Heart left ventricle (tissue), 16 donors: ENCODE measurements at regions of chr21 and their contacts with region 1.

Region 1: GRCh38 chr21:36859744-36860501 is 106.5 kb downstream of the HLCS start:
- DNase-seq: peak; percentile 84 to 86 (median 85)
- ATAC-seq: peak; percentile 80 to 99 (median 96)
- H3K4me3 ChIP-seq: no peak overlapping the region
- H3K27ac ChIP-seq: peak overlapping the region in 11 of 12 donors; percentile 25 to 83 (median 62)
- H3K4me1 ChIP-seq: peaks cover 0 to 16% (median 7%) of the 10 kb centered on the region in 12 donors
- H3K27me3 ChIP-seq: no peaks in the 10 kb centered on the region
- CTCF ChIP-seq: no peak
- POLR2A ChIP-seq: no peak

Region 2: DNA sequence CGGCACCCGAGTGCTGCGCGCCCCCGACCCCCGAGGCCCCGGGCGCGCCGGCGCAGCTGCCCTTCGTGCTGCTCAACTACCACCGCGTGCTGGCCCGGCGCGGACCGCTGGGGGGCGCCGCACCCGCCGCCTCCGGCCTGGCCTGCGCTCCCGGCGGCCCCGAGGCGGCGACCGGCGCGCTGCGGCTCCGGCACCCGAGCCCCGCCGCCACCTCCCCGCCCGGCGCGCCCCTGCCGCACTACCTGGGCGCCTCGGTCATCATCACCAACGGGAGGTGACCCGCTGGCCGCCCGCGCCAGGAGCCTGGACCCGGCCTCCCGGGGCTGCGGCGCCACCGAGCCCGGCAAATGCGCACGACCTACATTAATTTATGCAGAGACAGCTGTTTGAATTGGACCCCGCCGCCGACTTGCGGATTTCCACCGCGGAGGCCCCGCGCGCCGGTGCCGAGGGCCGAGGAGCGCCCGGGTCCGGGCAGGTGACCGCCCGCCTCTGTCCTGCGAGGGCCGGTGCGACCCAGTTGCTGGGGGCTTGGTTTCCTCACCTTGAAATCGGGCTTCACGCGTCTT is 112.0 kb before region 1 on chr21:
- intact Hi-C with region 1: loop called in 6 of 10 experiments (anchors 5 to 10 kb)
- DNase-seq: peak; percentile 39 to 71 (median 62)
- ATAC-seq: peak in 3 of 4 donors; percentile 49 to 77 (median 68)
- H3K4me3 ChIP-seq: peak overlapping the region; percentile 22 to 62 (median 56)
- H3K27ac ChIP-seq: peak overlapping the region in 1 of 12 donors; percentile 33
- H3K4me1 ChIP-seq: peaks cover 0 to 19% (median 5%) of the 10 kb centered on the region in 12 donors
- H3K27me3 ChIP-seq: peaks cover 0 to 29% (median 0%) of the 10 kb centered on the region in 9 donors
- CTCF ChIP-seq: peak in 4 of 12 donors; percentile 9 to 35 (median 26)
- POLR2A ChIP-seq: no peak

Region 3: DNA sequence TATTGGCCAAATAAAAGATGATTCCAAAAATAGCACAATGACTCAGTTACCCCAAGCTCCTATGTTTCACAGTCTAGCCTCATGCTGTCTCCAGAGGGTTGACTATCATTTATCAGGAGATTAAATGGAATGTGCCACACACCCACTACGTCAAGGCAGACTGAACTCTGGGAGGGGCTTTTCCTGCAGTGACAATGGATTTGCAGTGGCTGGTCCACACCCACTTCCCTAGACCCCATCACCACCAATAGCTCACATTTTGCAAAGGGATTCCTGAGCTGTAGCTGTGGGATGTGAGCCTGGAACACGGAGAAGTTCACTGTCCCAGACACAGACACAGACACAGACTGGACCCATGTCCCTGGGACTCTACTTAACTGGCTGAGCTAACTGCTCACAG is 29.5 kb after region 1 on chr21:
- intact Hi-C with region 1: loop called in 1 of 10 experiments (anchors 2 kb)
- DNase-seq: peak in 4 of 5 donors; percentile 36 to 60 (median 53)
- ATAC-seq: peak; percentile 86 to 98 (median 92)
- H3K4me3 ChIP-seq: no peak overlapping the region
- H3K27ac ChIP-seq: peak overlapping the region; percentile 60 to 86 (median 76)
- H3K4me1 ChIP-seq: peaks cover 0 to 22% (median 3%) of the 10 kb centered on the region in 12 donors
- H3K27me3 ChIP-seq: no peaks in the 10 kb centered on the region
- CTCF ChIP-seq: no peak
- POLR2A ChIP-seq: peak in 1 of 2 donors; percentile 31

Region 4: DNA sequence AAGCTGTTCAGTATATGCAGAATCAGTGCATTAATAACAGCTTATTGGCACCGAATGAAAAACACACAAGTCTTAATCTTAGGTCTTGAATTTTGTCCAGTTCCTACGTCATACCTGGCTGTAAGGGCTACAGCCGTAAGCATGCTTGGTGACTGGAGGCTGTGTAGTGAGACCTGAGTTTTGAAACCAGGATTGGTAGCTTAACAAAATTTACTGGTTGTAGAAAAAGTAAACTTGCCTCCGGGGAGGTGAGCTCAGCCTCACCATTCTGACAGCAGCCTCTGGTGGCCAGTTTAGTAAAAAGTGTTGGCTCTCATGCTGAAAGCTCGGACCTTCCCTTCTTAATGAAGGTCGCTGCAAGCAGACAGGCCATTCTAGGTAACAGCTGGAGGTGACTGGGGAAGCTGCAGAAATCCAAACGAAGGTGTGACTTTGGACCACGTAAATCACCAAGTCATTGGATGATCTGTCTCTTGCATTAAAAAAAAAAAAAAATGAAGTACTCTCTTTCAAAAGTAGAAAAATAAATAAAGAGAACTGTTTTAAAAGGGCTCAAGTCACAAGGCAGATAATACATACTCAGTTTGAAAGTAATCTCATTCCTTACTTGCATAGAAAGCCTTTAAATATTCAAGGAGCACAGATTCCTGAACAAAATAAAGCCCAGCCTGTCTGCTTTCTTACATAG is 57.7 kb after region 1 on chr21:
- intact Hi-C with region 1: loop called in 6 of 10 experiments (anchors 5 to 10 kb)
- DNase-seq: peak in 1 of 5 donors; percentile 30
- ATAC-seq: peak in 3 of 4 donors; percentile 52 to 72 (median 62)
- H3K4me3 ChIP-seq: no peak overlapping the region
- H3K27ac ChIP-seq: no peak overlapping the region
- H3K4me1 ChIP-seq: peaks cover 0 to 15% (median 0%) of the 10 kb centered on the region in 12 donors
- H3K27me3 ChIP-seq: no peaks in the 10 kb centered on the region
- CTCF ChIP-seq: peak; percentile 23 to 68 (median 53)
- POLR2A ChIP-seq: no peak